ENCODE measurements at regions of chr16 and their contacts with region 1.

Region 1: GRCh38 chr16:56931892-56932720 is at the start of gene HERPUD1:
- DNase-seq: peak; percentile 99
- ATAC-seq: peak; percentile 95
- H3K4me3 Mint-ChIP-seq: peak within 1 kb of the TSS; percentile 98
- H3K27ac Mint-ChIP-seq: peak within 1 kb of the TSS; percentile 100
- H3K4me1 Mint-ChIP-seq: peaks cover 32% of the 10 kb centered on the region
- H3K27me3 Mint-ChIP-seq: no peaks in the 10 kb centered on the region
- total RNA-seq, gene HERPUD1: 134 to 157 TPM

Region 2: GRCh38 chr16:56860226-56861020 is 71.7 kb before region 1 on chr16:
- POLR2A ChIA-PET with region 1: interaction called, 37 read pairs
- DNase-seq: peak; percentile 65
- ATAC-seq: peak; percentile 85
- H3K4me3 Mint-ChIP-seq: peak overlapping the region; percentile 72
- H3K27ac Mint-ChIP-seq: peak overlapping the region; percentile 96
- H3K4me1 Mint-ChIP-seq: peaks cover 54% of the 10 kb centered on the region
- H3K27me3 Mint-ChIP-seq: no peaks in the 10 kb centered on the region

Region 3: GRCh38 chr16:56897026-56897799 is 34.9 kb before region 1 on chr16:
- POLR2A ChIA-PET with region 1: interaction called, 10 read pairs
- DNase-seq: no peak
- ATAC-seq: no peak
- H3K4me3 Mint-ChIP-seq: no peak overlapping the region
- H3K27ac Mint-ChIP-seq: peak overlapping the region; percentile 32
- H3K4me1 Mint-ChIP-seq: peaks cover 27% of the 10 kb centered on the region
- H3K27me3 Mint-ChIP-seq: peaks cover 24% of the 10 kb centered on the region

Region 4: GRCh38 chr16:56911771-56912571 is 20.1 kb before region 1 on chr16:
- POLR2A ChIA-PET with region 1: interaction called, 81 read pairs
- DNase-seq: no peak
- ATAC-seq: no peak
- H3K4me3 Mint-ChIP-seq: no peak overlapping the region
- H3K27ac Mint-ChIP-seq: peak overlapping the region; percentile 27
- H3K4me1 Mint-ChIP-seq: peaks cover 32% of the 10 kb centered on the region
- H3K27me3 Mint-ChIP-seq: peaks cover 7% of the 10 kb centered on the region

Region 5: DNA sequence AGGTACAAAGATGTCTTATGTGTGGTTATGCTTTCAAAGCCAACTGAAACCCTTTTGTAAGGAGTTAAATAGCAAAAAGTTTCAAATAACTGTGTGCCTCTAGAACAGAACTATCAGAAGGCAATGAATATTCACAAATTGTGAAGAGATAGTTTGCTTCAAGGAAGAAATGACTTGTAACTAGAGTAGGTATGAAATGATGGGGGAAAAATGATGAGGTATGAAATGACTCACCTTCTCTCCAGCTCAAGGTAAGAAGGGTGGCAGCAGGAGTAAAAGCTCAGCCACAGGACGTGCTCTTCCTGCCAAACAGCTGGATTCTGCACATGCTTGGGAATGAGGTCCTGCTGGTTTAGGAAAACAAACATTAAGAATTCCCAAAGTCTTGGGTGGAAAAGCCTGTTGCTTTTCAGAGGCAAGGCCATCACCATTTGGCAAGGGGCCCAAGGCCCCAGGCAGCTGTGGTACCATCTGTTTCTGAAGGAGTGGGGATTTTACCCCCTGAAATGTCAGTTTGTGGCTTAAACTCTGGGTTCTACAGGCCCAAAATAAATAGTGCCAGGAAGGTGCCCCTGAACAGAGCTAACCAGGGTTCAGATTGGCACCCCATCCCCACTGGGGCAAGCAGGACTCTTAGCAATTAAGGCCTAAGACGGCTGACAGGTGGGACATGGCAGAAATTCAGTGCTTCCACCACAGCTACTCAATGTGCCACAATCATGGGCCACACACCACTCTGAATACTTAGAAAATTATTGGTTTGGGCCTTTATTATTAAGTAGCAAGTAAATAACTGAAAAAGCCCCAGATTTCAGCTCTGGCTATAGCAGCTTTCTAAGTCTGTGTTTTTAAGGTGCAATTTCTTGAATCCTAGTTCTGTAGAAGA is 13.1 kb after region 1 on chr16:
- POLR2A ChIA-PET with region 1: interaction called, 12 read pairs
- DNase-seq: no peak
- ATAC-seq: no peak
- H3K4me3 Mint-ChIP-seq: no peak overlapping the region
- H3K27ac Mint-ChIP-seq: no peak overlapping the region
- H3K4me1 Mint-ChIP-seq: peaks cover 14% of the 10 kb centered on the region
- H3K27me3 Mint-ChIP-seq: no peaks in the 10 kb centered on the region

Region 6: GRCh38 chr16:56995136-56995805 is 63.2 kb after region 1 on chr16:
- POLR2A ChIA-PET with region 1: no interaction called
- DNase-seq: peak; percentile 28
- ATAC-seq: no peak
- H3K4me3 Mint-ChIP-seq: peak overlapping the region; percentile 72
- H3K27ac Mint-ChIP-seq: peak overlapping the region; percentile 82
- H3K4me1 Mint-ChIP-seq: peaks cover 66% of the 10 kb centered on the region
- H3K27me3 Mint-ChIP-seq: no peaks in the 10 kb centered on the region

Measured in activated naive CD8-positive, alpha-beta T cell treated with anti-CD3 and anti-CD28 coated beads, Interleukin-2, amount 10 ng/mL, durations not matched to agents 7 days and 5 days (primary cell).